ENCODE measurements at regions of chr9 and their contacts with region 1.

Region 1: GRCh38 chr9:116572095-116572748 is 114.9 kb upstream of the TRIM32 start:
- DNase-seq: peak; percentile 89 to 91
- ATAC-seq: peak; percentile 95 to 100 (median 97)
- H3K4me3 ChIP-seq: no peak overlapping the region
- H3K27ac ChIP-seq: peak overlapping the region in 4 of 10 donors; percentile 2 to 39 (median 12)
- H3K4me1 ChIP-seq: peaks cover 0 to 48% (median 38%) of the 10 kb centered on the region in 9 donors
- H3K27me3 ChIP-seq: no peaks in the 10 kb centered on the region
- CTCF ChIP-seq: peak; percentile 72 to 96 (median 84)

Region 2: DNA sequence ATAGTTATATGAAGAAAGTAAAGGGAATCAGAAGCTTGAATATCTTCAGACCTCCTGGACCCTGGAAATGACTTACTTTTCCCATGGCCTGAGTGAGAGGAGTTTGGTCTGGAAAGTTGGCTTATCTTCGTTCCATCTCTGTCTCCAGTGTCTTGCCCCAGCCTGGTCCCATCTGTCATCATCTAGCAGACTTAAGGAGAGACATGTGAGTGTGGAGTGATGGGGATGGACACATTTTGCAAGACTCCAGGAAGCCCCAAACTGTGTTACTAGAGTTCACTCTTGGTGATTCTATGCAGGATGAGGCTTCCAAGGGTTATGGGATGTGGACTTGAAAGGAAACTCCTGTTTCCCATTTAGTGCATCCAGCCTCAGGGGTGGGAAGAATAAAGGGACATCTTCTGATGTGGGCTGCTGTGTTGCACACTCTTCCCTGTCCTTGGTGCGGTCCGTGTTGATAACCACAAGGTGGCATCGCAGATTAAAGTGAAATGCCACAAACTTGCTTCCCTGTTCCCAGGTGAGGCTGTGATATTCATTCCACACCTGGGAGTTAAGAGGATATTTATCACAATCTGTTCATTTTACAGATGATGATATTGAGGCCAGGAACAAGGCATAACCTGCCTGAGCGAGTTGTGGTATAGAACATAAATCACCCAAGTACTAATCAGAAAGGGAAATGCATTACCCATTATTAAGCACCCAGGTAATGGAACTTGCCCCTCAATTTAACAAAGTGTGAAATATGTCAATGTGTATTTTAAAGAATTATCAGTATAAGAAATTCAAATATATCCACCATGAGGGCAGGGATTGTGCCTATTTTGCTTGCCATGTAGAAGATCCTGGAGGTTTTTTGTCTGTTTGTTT is 688.5 kb before region 1 on chr9:
- intact Hi-C with region 1: loop called in 3 of 10 experiments (anchors 2 to 10 kb)
- DNase-seq: peak in 1 of 2 donors; percentile 13
- ATAC-seq: peak in 6 of 8 donors; percentile 43 to 81 (median 64)
- H3K4me3 ChIP-seq: no peak overlapping the region
- H3K27ac ChIP-seq: no peak overlapping the region
- H3K4me1 ChIP-seq: no peaks in the 10 kb centered on the region
- H3K27me3 ChIP-seq: no peaks in the 10 kb centered on the region
- CTCF ChIP-seq: peak; percentile 11 to 66 (median 57)

Region 3: DNA sequence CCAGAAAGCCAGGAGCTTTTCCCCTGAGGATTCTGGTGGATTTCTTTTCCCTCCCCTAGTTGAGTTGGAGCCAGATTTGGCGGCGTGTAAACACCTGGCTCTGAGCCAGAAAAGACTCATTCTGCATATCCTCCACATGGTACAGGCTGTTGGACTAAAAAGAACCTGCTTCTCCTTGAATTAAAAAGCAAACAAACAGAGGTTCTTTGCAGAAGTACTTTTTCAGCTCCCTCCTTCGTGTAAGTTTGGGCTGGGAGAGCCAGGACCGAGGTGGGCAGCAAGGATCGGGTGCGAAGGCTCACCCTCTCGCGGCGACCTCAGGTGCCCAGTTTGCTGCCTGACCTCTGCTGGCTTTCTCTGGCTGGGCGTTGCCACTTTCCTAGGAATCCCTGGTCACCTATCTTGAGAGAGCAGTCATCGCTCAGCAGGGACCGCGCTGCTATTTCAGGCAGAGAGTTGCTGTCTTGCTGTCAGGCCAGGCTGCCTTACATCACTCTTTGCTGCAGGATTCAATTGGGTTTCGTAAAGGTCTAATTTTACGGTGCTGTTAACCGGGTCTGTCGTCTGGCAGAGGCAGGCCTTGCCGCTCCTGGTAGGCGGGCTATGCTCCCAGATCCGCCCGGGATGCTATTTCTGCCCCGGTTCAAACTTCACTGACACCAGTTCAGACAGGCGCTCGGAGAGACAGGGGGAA is 415.5 kb before region 1 on chr9:
- intact Hi-C with region 1: loop called (anchors 1 to 10 kb)
- DNase-seq: peak; percentile 63 to 79
- ATAC-seq: peak; percentile 84 to 98 (median 94)
- H3K4me3 ChIP-seq: peak overlapping the region in 9 of 10 donors; percentile 3 to 65 (median 43)
- H3K27ac ChIP-seq: peak overlapping the region; percentile 74 to 95 (median 87)
- H3K4me1 ChIP-seq: peaks cover 6 to 41% (median 20%) of the 10 kb centered on the region in 9 donors
- H3K27me3 ChIP-seq: peaks cover 0 to 60% (median 5%) of the 10 kb centered on the region in 7 donors
- CTCF ChIP-seq: no peak

Region 4: GRCh38 chr9:116280529-116280928 is 291.7 kb before region 1 on chr9:
- intact Hi-C with region 1: loop called in 1 of 10 experiments (anchors 5 kb)
- DNase-seq: no peak
- ATAC-seq: no peak
- H3K4me3 ChIP-seq: no peak overlapping the region
- H3K27ac ChIP-seq: no peak overlapping the region
- H3K4me1 ChIP-seq: peaks cover 0 to 7% (median 0%) of the 10 kb centered on the region in 9 donors
- H3K27me3 ChIP-seq: no peaks in the 10 kb centered on the region
- CTCF ChIP-seq: no peak

Region 5: DNA sequence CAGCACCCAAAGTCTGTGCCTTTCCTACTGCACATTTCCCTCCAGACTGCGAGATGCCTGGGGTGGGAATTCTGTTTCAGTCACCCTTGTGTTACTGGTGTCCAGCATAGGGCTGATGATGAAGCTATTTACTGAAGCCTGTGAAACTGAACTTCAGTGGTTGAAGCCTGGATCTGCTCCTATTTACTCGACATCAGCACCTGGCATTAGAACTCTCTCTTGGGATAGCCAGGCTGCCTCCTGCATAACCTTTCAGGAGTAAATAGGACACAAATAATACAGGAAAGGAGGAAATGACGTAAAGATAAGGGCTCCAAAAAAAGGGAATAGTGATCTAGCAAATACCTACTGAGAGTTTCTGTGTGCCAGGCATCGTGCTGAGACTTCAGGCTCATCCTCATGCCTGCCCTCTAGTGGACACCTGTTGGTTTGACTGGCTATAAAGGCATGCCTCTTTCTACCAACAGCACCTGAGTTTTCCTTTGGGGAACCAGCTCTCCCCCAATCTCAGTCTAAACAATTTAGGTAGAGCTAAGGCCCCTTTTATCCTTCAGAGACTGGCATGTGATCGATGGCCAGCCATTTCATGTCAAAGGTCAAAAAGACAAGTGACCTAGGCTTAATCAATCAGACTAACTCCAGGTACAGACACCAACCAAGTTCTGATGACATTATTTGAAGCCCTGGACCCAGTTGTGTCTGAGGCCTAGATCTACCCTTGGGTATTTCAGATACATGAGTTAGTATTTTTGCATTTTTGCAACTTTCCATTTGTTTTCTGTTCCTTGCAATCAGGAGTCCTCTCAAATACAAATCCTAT is 77.2 kb before region 1 on chr9:
- intact Hi-C with region 1: loop called in 5 of 10 experiments (anchors 2 to 10 kb)
- DNase-seq: peak in 1 of 2 donors; percentile 9
- ATAC-seq: peak in 1 of 8 donors; percentile 37
- H3K4me3 ChIP-seq: no peak overlapping the region
- H3K27ac ChIP-seq: no peak overlapping the region
- H3K4me1 ChIP-seq: peaks cover 0 to 9% (median 0%) of the 10 kb centered on the region in 9 donors
- H3K27me3 ChIP-seq: no peaks in the 10 kb centered on the region
- CTCF ChIP-seq: peak; percentile 35 to 76 (median 66)

Region 6: GRCh38 chr9:116632990-116633838 is 61.0 kb after region 1 on chr9:
- intact Hi-C with region 1: no loop called
- DNase-seq: peak in 1 of 2 donors; percentile 19
- ATAC-seq: peak; percentile 63 to 90 (median 80)
- H3K4me3 ChIP-seq: no peak overlapping the region
- H3K27ac ChIP-seq: peak overlapping the region in 6 of 10 donors; percentile 45 to 71 (median 58)
- H3K4me1 ChIP-seq: peaks cover 0 to 7% (median 0%) of the 10 kb centered on the region in 9 donors
- H3K27me3 ChIP-seq: no peaks in the 10 kb centered on the region
- CTCF ChIP-seq: no peak

Region 7: GRCh38 chr9:116646661-116647512 is 74.7 kb after region 1 on chr9:
- intact Hi-C with region 1: loop called in 6 of 10 experiments (anchors 5 to 10 kb)
- DNase-seq: no peak
- ATAC-seq: peak; percentile 65 to 86 (median 76)
- H3K4me3 ChIP-seq: no peak overlapping the region
- H3K27ac ChIP-seq: peak overlapping the region in 3 of 10 donors; percentile 4 to 53 (median 29)
- H3K4me1 ChIP-seq: peaks cover 0 to 35% (median 14%) of the 10 kb centered on the region in 9 donors
- H3K27me3 ChIP-seq: no peaks in the 10 kb centered on the region
- CTCF ChIP-seq: peak in 8 of 9 donors; percentile 29 to 71 (median 62)